Cardiac septum (tissue), 1 donor: ENCODE measurements at regions of chr2 and their contacts with region 1.

Region 1: GRCh38 chr2:203683932-203684556 is 22.4 kb upstream of the CD28 start:
- DNase-seq: no peak

Region 2: GRCh38 chr2:203535078-203535783 is 148.8 kb before region 1 on chr2 and contains the start of gene RAPH1:
- intact Hi-C with region 1: loop called (anchors 2 kb)
- DNase-seq: peak; percentile 89
- total RNA-seq, gene RAPH1: 20.6 TPM

Region 3: GRCh38 chr2:203782262-203782976 is 98.4 kb after region 1 on chr2:
- intact Hi-C with region 1: loop called (anchors 10 kb)
- DNase-seq: no peak

Region 4: DNA sequence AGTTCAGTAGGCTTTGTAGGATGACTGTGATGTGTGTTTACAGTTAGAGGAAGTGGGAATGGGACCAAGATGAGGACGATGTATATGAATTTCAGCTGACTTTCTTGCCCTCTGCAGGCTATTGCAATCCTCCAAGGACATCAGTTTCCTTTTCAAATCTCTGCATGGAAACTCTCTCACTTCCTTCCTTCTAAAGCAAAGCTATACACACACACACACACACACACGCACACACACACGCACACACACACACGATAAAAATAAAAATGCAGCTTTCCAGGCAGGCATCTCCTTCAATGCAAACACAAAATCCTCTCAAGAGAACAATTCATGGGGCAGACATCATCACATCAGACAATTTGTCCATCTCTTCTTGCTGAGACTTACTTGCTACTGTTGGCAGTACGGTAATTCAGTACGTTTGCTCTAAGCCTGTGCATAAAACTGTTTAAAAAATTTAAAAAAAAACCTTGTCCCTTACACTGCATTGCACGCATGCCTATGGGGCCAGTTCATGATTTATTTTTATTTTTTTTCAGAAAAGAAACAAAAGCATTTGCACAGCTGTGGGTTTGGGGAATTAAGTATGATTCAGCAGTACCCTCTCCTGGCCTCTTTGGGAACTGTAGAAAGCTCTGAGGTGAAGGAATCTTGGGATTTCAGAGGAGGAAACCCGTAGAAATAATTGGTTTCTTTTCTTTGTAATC is 225.4 kb after region 1 on chr2:
- intact Hi-C with region 1: loop called (anchors 10 kb)
- DNase-seq: no peak

Region 5: GRCh38 chr2:203997980-203998809 is 314.2 kb after region 1 on chr2:
- intact Hi-C with region 1: no loop called
- DNase-seq: no peak